Endothelial cell of umbilical vein (primary cell): ENCODE measurements at regions of chr16 and their contacts with region 1.

Region 1: GRCh38 chr16:84970447-84971127 is 40.7 kb downstream of the ZDHHC7 start:
- DNase-seq: peak; percentile 70
- H3K4me3 ChIP-seq: no peak overlapping the region
- H3K27ac ChIP-seq: no peak overlapping the region
- H3K4me1 ChIP-seq: no peaks in the 10 kb centered on the region
- H3K27me3 ChIP-seq: no peaks in the 10 kb centered on the region
- CTCF ChIP-seq: peak; percentile 86 to 90
- POLR2A ChIP-seq: no peak

Region 2: DNA sequence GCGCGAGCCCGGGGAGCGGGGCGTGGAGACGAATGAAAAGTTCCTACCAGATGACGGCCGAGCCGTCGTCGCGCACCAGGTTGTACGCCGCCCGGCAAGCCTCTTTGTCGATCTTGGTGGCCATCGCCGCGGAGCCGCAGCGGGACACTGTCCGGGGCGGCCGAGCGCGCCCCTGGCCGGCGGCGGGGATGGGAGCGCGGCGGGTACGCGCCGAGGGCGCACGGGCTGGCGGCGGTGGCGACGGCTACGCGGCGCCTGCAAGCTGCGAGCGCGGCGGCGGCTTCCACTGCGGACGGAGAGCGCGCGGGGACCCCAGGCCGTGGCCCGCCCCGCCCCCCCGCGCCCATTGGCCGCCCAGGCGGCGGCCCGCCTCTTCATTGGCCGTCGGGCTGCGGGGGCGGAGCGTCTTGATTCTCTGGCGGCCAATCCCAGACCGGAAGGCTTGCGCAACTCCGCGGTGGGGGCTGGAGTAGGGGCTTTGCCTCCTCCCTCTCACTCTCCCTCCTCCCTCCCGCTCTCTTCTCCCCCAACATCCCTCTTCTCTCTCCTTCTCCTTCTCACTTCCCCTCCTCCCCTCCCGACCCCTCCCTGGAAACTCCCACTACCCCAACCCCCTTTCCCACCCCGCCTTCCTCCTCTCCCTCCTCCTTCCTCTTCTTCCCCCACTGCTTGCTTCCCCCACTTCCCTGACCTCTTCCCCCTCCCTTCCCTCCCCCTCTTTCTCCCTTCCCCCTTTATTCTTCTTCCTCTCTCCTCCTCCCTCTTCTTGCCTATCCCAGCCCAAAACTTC is 352.6 kb before region 1 on chr16 and contains the start of gene COTL1:
- CTCF ChIA-PET with region 1: interaction called, 26 read pairs
- POLR2A ChIA-PET with region 1: no interaction called
- dilution Hi-C with region 1: no loop called
- intact Hi-C with region 1: loop called (anchors 1 kb)
- DNase-seq: peak; percentile 93
- H3K4me3 ChIP-seq: peak within 1 kb of the TSS; percentile 81 to 94 (median 84)
- H3K27ac ChIP-seq: peak within 1 kb of the TSS; percentile 57
- H3K4me1 ChIP-seq: peaks cover 31% of the 10 kb centered on the region
- H3K27me3 ChIP-seq: no peaks in the 10 kb centered on the region
- CTCF ChIP-seq: no peak
- POLR2A ChIP-seq: peak; percentile 93
- total RNA-seq, gene COTL1: 132 and 200 TPM in 2 replicates

Region 3: DNA sequence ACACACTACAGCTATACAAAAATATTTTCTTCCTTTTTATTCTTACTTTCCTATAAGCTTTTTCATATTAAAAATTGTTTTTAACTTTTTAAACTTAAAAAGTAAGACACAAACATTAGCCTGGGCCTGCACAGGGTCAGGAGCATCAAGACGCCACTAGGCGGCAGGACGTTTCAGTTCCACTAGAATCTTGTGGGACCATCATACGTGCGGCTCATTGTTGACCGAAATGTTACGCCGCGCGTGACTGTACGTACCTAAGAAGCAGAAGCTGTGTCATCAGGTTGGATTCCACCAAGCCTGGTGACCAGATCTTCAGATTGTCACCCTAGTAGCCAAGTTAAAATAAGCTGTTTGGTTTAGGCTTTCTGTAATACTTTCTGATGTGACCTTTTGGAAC is 223.7 kb before region 1 on chr16:
- CTCF ChIA-PET with region 1: interaction called, 361 read pairs
- POLR2A ChIA-PET with region 1: no interaction called
- dilution Hi-C with region 1: loop called (anchors 25 kb)
- intact Hi-C with region 1: no loop called
- DNase-seq: no peak
- H3K4me3 ChIP-seq: no peak overlapping the region
- H3K27ac ChIP-seq: no peak overlapping the region
- H3K4me1 ChIP-seq: peaks cover 4% of the 10 kb centered on the region
- H3K27me3 ChIP-seq: no peaks in the 10 kb centered on the region
- CTCF ChIP-seq: peak in 1 of 2 donors; percentile 8
- POLR2A ChIP-seq: no peak

Region 4: GRCh38 chr16:84774810-84775209 is 195.8 kb before region 1 on chr16:
- CTCF ChIA-PET with region 1: interaction called, 12 read pairs
- POLR2A ChIA-PET with region 1: no interaction called
- dilution Hi-C with region 1: loop called (anchors 25 kb)
- intact Hi-C with region 1: no loop called
- DNase-seq: peak; percentile 85
- H3K4me3 ChIP-seq: no peak overlapping the region
- H3K27ac ChIP-seq: peak overlapping the region; percentile 48
- H3K4me1 ChIP-seq: peaks cover 9% of the 10 kb centered on the region
- H3K27me3 ChIP-seq: no peaks in the 10 kb centered on the region
- CTCF ChIP-seq: no peak
- POLR2A ChIP-seq: no peak

Region 5: DNA sequence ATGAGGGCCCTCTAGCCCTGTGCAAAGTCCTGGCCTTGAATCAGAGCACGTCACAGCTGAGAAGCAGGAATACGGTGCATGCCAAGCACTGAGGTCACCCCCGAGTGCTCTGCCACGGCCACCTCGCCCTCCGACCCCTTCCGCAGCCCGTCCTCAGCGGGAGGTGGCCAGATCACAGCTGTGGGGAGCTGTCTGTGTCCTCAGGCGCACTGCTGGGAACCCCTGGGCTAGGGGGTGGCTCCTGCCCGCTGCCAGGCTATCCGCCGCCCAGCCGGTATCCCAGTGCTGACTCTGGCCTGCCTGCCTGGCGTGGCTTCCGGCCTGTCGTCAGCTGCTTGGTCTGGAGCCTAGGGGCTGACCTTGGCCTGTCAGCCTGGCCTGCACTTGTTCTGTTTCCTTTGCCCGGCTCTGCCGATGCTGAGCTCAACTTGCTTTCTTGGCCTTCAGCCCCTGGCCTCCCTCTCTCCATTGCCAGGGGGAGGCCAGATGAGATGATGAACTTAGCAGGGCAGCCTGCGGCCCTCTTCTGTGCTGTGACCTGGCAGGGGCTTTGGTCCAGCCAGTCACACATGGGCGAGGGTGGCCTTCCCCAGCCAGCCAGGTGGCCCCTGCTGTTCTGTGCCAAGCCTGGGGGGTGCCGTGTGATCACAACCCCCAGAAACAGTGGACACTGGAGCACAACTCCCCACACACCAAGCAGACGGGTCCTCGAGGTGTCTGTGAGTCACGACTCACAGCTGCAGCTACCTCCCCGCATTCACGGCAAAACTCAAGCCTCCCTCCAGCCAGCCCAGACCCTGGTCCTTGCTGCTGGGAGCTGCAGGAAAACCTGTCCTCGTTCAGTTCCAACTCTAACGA is 36.6 kb before region 1 on chr16:
- CTCF ChIA-PET with region 1: interaction called, 73 read pairs
- POLR2A ChIA-PET with region 1: no interaction called
- dilution Hi-C with region 1: no loop called
- intact Hi-C with region 1: no loop called
- DNase-seq: no peak
- H3K4me3 ChIP-seq: no peak overlapping the region
- H3K27ac ChIP-seq: no peak overlapping the region
- H3K4me1 ChIP-seq: peaks cover 4% of the 10 kb centered on the region
- H3K27me3 ChIP-seq: no peaks in the 10 kb centered on the region
- CTCF ChIP-seq: no peak
- POLR2A ChIP-seq: no peak

Region 6: GRCh38 chr16:84995663-84996062 is 25.1 kb after region 1 on chr16:
- CTCF ChIA-PET with region 1: interaction called, 15 read pairs
- POLR2A ChIA-PET with region 1: interaction called, 8 read pairs
- dilution Hi-C with region 1: no loop called
- intact Hi-C with region 1: no loop called
- DNase-seq: no peak
- H3K4me3 ChIP-seq: no peak overlapping the region
- H3K27ac ChIP-seq: peak overlapping the region; percentile 89
- H3K4me1 ChIP-seq: peaks cover 26% of the 10 kb centered on the region
- H3K27me3 ChIP-seq: no peaks in the 10 kb centered on the region
- CTCF ChIP-seq: no peak
- POLR2A ChIP-seq: no peak

Region 7: DNA sequence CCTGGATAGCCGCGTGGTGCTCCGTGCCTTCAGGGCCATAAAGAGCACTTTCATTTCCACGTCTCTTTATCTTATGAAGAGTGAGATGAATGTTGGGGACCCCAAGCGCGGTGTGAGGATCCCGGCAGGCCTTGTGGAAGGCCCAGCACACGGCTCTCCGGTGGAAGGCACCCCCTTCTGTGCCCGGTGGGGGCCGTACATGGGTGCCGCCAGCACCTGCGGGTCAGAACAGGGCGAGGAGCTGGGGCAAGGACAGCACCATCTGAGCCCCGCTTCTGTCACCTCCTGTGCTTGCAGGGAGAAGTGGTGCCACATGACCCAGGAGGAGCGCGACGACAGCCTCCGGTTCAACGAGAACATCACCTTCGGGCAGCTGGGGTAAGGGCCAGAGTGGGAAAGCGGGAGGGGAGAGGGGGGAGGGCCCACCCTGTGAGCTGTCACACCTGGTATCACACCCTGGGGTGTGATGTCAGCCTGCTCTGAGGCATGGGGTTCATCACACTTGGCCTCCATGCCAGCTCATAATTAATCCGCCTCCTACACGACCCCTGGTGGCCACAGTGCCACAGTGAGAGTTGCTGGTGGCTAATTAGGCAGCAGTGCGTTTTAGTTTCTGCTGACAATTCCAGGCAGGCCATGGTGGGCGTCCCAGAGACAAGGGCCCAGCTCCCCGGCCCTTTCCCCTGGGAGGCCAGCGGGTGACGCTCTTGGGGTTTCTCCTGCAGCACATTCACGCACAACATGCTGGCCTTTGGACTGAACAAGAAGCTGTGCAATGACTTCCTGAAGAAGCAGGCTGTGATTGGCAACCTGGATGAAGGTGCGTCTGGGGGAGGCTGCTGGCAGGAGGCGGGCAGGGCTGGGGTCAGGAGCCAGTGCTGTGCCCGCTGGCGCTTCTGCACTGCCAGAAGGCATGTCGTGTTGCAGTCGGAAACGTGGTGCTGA is 116.0 kb after region 1 on chr16:
- CTCF ChIA-PET with region 1: interaction called, 53 read pairs
- POLR2A ChIA-PET with region 1: no interaction called
- dilution Hi-C with region 1: no loop called
- intact Hi-C with region 1: no loop called
- DNase-seq: peak; percentile 63
- H3K4me3 ChIP-seq: no peak overlapping the region
- H3K27ac ChIP-seq: no peak overlapping the region
- H3K4me1 ChIP-seq: no peaks in the 10 kb centered on the region
- H3K27me3 ChIP-seq: peaks cover 3 to 7% of the 10 kb centered on the region in 2 experiments
- CTCF ChIP-seq: peak; percentile 77 to 81
- POLR2A ChIP-seq: no peak

Region 8: GRCh38 chr16:85461814-85462713 is 491.5 kb after region 1 on chr16:
- CTCF ChIA-PET with region 1: no interaction called
- POLR2A ChIA-PET with region 1: no interaction called
- dilution Hi-C with region 1: no loop called
- intact Hi-C with region 1: no loop called
- DNase-seq: no peak
- H3K4me3 ChIP-seq: no peak overlapping the region
- H3K27ac ChIP-seq: no peak overlapping the region
- H3K4me1 ChIP-seq: no peaks in the 10 kb centered on the region
- H3K27me3 ChIP-seq: peaks cover 20 to 24% of the 10 kb centered on the region in 2 experiments
- CTCF ChIP-seq: no peak
- POLR2A ChIP-seq: no peak